Posterior vena cava (tissue), 2 donors: ENCODE measurements at regions of chr19 and their contacts with region 1.

Region 1: DNA sequence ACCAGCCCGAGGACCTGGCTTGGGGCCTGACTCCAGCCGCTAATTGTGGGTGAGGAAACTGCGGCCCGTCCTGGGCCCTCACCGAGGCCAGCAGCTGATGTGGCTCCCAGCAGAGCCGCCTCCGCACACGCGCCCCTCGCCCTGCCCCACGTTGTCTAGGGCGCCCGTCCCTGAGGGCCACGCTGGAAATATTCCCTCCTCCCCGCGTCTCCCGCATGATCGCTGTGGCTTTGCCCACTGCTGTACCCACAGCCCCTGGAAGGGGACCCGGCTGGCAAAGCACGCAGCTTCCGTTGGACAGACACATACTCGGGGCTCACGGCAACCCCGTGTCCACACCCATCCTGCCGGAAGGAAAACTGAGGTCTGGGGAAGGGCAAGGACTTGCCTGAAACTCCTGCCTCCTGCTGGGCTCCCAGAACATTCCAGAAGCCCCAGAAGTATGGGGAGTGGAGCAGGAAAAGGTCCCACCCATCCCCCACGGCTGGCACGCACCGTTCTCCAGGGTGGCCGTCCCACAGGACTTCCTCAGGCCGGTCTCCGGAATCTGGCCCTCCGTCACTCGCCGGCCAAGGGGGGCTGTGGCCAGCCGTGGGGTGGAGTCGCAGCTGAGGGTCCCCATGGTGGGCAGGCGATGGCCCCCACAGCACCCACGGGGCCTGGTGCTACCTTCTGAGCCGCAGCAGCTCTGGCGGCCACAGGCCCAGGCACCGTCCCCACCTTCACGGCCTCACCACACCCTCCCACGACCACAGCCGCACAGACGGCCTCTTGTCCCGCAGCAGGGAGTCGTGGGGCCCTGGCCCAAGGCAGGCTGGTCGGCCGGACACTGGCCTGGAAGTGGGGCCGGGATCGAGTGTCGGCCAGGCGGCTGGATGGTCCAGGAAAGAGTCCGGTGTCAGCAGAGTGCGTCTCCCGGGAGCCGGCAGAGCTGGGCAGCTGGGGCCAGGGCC is 13.6 kb upstream of the SHC2 start:
- DNase-seq: peak; percentile 81

Region 2: DNA sequence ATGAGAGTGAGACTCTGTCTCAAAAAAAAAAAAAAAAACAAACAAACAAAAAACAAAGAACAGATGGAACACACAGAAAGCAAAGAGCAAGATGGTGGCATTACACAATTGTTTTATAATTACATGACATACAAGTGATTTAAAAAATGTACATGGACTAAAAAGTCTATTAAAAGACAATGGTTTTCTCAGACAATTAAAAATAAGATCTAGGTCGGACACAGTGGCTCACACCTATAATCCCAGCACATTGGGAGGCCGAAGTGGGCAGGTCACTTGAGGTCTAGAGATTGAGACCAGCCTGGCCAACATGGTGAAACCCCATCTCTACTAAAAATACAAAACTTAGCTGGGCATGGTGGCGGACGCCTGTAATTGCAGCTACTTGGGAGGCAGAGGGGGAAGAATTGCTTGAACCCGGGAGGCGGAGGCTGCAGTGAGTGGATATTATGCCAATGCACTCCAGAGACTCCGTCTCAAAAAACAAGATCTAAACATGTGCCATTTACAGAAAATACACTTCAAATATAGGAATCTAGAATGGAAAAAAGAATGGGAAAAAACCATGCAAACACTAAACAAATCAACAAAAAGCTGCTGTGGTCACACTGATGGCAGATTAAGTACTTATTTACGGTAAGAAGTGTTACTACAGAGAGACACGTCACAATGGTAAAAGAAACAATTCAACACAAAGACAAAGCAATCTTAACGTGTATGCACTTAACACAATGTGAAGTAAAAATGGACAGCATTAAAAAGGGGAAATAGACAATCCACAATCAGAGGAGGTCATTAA is 156.5 kb before region 1 on chr19:
- intact Hi-C with region 1: no loop called
- DNase-seq: peak; percentile 62

Region 3: GRCh38 chr19:383922-384798 is 90.2 kb before region 1 on chr19:
- intact Hi-C with region 1: loop called in 1 of 2 experiments (anchors 10 kb)
- DNase-seq: peak; percentile 78

Region 4: DNA sequence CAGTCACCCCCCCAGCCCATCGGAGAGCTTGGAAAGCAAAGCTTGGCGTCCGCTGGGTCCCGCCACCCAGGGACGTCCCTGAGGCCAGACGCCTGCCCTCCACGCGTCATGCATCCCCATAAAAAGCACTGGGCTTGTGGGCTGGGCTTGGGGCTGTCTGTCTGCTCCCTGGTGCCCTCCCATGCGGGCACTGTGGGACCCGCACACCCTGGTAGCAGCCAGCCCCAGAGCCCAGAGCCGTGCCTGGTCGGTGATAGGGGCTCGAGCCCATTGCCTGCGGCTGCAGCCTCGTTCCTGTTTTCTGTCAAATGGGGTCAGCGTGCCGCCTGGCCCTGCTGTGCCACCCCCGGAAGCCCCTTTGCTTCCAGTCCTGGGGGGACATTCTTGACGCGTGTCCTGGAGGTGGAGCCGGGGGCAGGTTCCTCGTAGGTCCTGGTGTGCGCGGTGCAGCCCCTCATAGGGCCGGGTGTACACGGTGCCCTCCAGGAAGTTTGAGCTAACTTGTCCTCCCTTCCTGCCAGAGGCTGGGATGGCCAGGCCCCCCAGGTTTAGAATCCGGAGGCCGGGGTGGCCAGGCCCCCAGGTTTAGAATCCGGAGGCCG is 65.1 kb after region 1 on chr19:
- intact Hi-C with region 1: loop called in 1 of 2 experiments (anchors 2 kb)
- DNase-seq: no peak